ENCODE measurements at regions of chr15 and their contacts with region 1.

Region 1: DNA sequence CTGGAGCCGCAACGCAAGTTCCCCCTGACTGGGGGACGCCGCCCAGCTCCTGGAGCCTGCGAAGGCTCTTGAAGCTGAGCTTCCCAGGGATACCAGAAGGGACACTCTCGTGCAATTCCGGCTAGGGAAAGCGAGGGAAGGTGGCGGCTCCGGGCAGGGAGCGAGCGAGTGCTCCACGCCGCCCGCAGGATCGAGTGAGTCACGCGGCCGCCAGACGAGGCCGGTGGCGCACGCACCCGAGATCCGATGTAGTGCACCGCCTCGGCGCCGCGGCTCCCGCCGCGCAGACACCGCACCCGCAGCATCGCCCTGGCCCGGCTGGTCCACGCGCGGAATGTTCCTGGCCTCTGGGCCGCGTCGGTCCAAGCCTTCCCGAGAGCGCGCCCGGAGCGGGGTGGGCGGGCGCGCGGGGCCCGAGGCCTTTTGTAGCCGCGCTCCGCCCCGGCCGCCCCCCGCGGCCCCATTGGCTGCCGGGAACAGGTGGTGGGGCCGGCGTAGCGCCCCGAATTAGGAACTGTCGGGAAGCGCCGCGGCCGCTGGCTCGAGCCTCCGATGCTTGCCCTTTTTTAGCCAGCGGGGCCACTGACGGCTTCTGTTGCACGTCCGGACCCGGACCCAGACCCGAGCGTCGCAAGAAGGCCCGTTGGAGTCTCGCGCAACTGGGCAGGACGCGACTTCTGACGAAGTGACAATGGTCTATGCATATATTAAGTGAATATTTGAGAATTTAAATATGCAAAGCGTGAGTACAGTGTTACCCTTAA is at the start of gene GATM:
- DNase-seq: no peak
- H3K4me3 Mint-ChIP-seq: peak within 1 kb of the TSS; percentile 64
- H3K27ac Mint-ChIP-seq: no peak within 1 kb of the TSS
- H3K4me1 Mint-ChIP-seq: peaks cover 7% of the 10 kb centered on the region
- H3K27me3 Mint-ChIP-seq: peaks cover 76% of the 10 kb centered on the region
- total RNA-seq, gene GATM: 0.86 and 1.0 TPM in 2 replicates

Region 2: GRCh38 chr15:45118131-45118588 is 260.2 kb before region 1 on chr15:
- intact Hi-C with region 1: loop called (anchors 5 kb)
- DNase-seq: peak; percentile 75
- H3K4me3 Mint-ChIP-seq: peak overlapping the region; percentile 70
- H3K27ac Mint-ChIP-seq: peak overlapping the region; percentile 74
- H3K4me1 Mint-ChIP-seq: peaks cover 26% of the 10 kb centered on the region
- H3K27me3 Mint-ChIP-seq: peaks cover 67% of the 10 kb centered on the region

Region 3: GRCh38 chr15:45391746-45392583 is 13.6 kb after region 1 on chr15:
- intact Hi-C with region 1: no loop called
- DNase-seq: no peak
- H3K4me3 Mint-ChIP-seq: no peak overlapping the region
- H3K27ac Mint-ChIP-seq: no peak overlapping the region
- H3K4me1 Mint-ChIP-seq: peaks cover 12% of the 10 kb centered on the region
- H3K27me3 Mint-ChIP-seq: peaks cover 45% of the 10 kb centered on the region

Region 4: GRCh38 chr15:45583731-45584639 is 205.7 kb after region 1 on chr15:
- intact Hi-C with region 1: no loop called
- DNase-seq: no peak
- H3K4me3 Mint-ChIP-seq: no peak overlapping the region
- H3K27ac Mint-ChIP-seq: no peak overlapping the region
- H3K4me1 Mint-ChIP-seq: peaks cover 33% of the 10 kb centered on the region
- H3K27me3 Mint-ChIP-seq: peaks cover 11% of the 10 kb centered on the region